A549 (cell line): ENCODE measurements at regions of chr2 and their contacts with region 1.

Region 1: GRCh38 chr2:177254433-177255226 is 9.9 kb downstream of the NFE2L2 start:
- DNase-seq: peak in 1 of 2 experiments; percentile 86
- ATAC-seq: peak; percentile 66 to 80
- H3K4me3 ChIP-seq: no peak overlapping the region
- H3K27ac ChIP-seq: peak overlapping the region; percentile 75 to 81; a peak in 5 of 6 replicates
- H3K4me1 ChIP-seq: peaks cover 78% of the 10 kb centered on the region
- CTCF ChIP-seq: peak; percentile 72
- EP300 ChIP-seq: no peak
- POLR2A ChIP-seq: no peak
- RAD21 ChIP-seq: peak; percentile 49 to 66; a peak in 4 of 5 replicates

Region 2: GRCh38 chr2:177098001-177098613 is 156.5 kb before region 1 on chr2:
- CTCF ChIA-PET with region 1: no interaction called
- POLR2A ChIA-PET with region 1: no interaction called
- DNase-seq: no peak
- ATAC-seq: no peak
- H3K4me3 ChIP-seq: no peak overlapping the region
- H3K27ac ChIP-seq: no peak overlapping the region
- H3K4me1 ChIP-seq: no peaks in the 10 kb centered on the region
- CTCF ChIP-seq: no peak
- EP300 ChIP-seq: no peak
- POLR2A ChIP-seq: no peak
- RAD21 ChIP-seq: no peak

Region 3: GRCh38 chr2:177239932-177240630 is 14.5 kb before region 1 on chr2:
- CTCF ChIA-PET with region 1: interaction called, 13 read pairs
- POLR2A ChIA-PET with region 1: interaction called, 3 read pairs
- DNase-seq: peak in 1 of 2 experiments; percentile 70
- ATAC-seq: peak; percentile 37 to 49; a peak in 5 of 6 replicates
- H3K4me3 ChIP-seq: no peak overlapping the region
- H3K27ac ChIP-seq: peak overlapping the region; percentile 84 to 86
- H3K4me1 ChIP-seq: peaks cover 81% of the 10 kb centered on the region
- CTCF ChIP-seq: no peak
- EP300 ChIP-seq: no peak
- POLR2A ChIP-seq: no peak
- RAD21 ChIP-seq: no peak

Region 4: GRCh38 chr2:178101321-178102079 is 846.9 kb after region 1 on chr2:
- CTCF ChIA-PET with region 1: no interaction called
- POLR2A ChIA-PET with region 1: no interaction called
- DNase-seq: no peak
- ATAC-seq: peak in 1 of 2 experiments; percentile 25; a peak in 2 of 6 replicates
- H3K4me3 ChIP-seq: no peak overlapping the region
- H3K27ac ChIP-seq: no peak overlapping the region
- H3K4me1 ChIP-seq: 0 out of 3 replicates have a peak, but pooled peaks cover 6% of the 10 kb centered on the region
- CTCF ChIP-seq: no peak
- EP300 ChIP-seq: no peak
- POLR2A ChIP-seq: no peak
- RAD21 ChIP-seq: no peak